GM12878 (cell line): ENCODE measurements at regions of chr20 and their contacts with region 1.

Region 1: GRCh38 chr20:56595746-56596478 is 33.2 kb upstream of the TFAP2C start:
- DNase-seq: no peak
- ATAC-seq: no peak
- H3K4me3 ChIP-seq: no peak overlapping the region
- H3K27ac ChIP-seq: no peak overlapping the region
- H3K4me1 ChIP-seq: no peaks in the 10 kb centered on the region
- H3K27me3 ChIP-seq: no peaks in the 10 kb centered on the region
- CTCF ChIP-seq: no peak
- EP300 ChIP-seq: no peak
- POLR2A ChIP-seq: no peak
- RAD21 ChIP-seq: no peak

Region 2: GRCh38 chr20:56885521-56885920 is 289.6 kb after region 1 on chr20:
- CTCF ChIA-PET with region 1: no interaction called
- POLR2A ChIA-PET with region 1: interaction called, 10 read pairs
- RAD21 ChIA-PET with region 1: no interaction called
- SMC1A ChIA-PET with region 1: no interaction called
- in situ Hi-C with region 1: no loop called
- intact Hi-C with region 1: no loop called
- DNase-seq: no peak
- ATAC-seq: no peak
- H3K4me3 ChIP-seq: no peak overlapping the region
- H3K27ac ChIP-seq: no peak overlapping the region
- H3K4me1 ChIP-seq: no peaks in the 10 kb centered on the region
- H3K27me3 ChIP-seq: no peaks in the 10 kb centered on the region
- CTCF ChIP-seq: no peak
- EP300 ChIP-seq: no peak
- POLR2A ChIP-seq: no peak
- RAD21 ChIP-seq: no peak